Endothelial cell of umbilical vein (primary cell): ENCODE measurements at regions of chr10 and their contacts with region 1.

Region 1: GRCh38 chr10:124741281-124741921 is 2.8 kb downstream of the FAM53B start:
- DNase-seq: peak; percentile 85
- H3K4me3 ChIP-seq: peak overlapping the region in 1 of 3 experiments; percentile 17
- H3K27ac ChIP-seq: no peak overlapping the region
- H3K4me1 ChIP-seq: peaks cover 39% of the 10 kb centered on the region
- H3K27me3 ChIP-seq: no peaks in the 10 kb centered on the region
- CTCF ChIP-seq: peak; percentile 77 to 81
- POLR2A ChIP-seq: no peak

Region 2: DNA sequence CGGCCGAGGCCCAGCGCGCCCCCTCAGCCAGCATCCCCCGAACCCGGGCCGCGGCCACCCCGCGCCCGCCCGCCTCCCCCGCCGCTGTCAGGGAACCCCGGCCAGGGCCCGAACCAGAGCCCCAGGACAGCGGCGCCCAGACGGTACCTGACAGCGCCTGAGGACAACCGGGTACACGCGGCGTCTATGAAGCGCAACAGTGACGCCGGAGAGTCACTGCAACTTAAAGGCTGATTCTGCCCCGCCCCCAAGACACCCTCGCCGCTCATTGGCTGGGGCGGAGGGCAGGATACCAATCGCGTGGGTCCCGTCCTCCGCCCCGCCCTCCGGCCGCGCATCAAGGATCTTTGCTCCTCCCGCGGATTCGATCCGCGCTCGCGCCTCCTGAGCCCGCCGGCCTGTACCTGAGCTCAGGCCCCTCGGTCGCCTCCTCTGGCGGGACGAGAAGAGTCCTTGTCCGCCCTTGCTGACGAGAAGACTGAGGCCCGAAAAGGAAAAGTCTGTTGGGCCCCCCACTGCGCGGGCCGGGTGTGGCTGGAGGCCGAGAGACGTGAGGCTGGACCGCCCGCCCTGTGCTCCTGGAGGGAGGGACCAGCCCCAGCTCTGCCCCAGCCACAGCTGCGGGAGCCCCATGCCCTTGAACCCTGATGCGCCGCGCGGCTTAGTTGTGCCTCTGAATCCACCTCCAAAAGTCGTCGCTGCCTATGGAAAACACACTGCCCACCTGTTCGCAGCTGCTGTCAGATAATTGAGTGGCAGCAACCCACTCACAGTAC is 322.5 kb before region 1 on chr10 and contains the start of gene OAT:
- CTCF ChIA-PET with region 1: no interaction called
- POLR2A ChIA-PET with region 1: no interaction called
- dilution Hi-C with region 1: no loop called
- intact Hi-C with region 1: loop called (anchors 5 kb)
- DNase-seq: peak; percentile 96
- H3K4me3 ChIP-seq: peak within 1 kb of the TSS; percentile 75 to 86 (median 77)
- H3K27ac ChIP-seq: peak within 1 kb of the TSS; percentile 55
- H3K4me1 ChIP-seq: peaks cover 2% of the 10 kb centered on the region
- H3K27me3 ChIP-seq: peaks cover 0 to 6% of the 10 kb centered on the region in 2 experiments
- CTCF ChIP-seq: peak in 1 of 2 donors; percentile 31
- POLR2A ChIP-seq: peak; percentile 99
- total RNA-seq, gene OAT: 90.1 and 90.8 TPM in 2 replicates

Region 3: GRCh38 chr10:124539935-124540641 is 201.3 kb before region 1 on chr10:
- CTCF ChIA-PET with region 1: interaction called, 226 read pairs
- POLR2A ChIA-PET with region 1: no interaction called
- dilution Hi-C with region 1: no loop called
- intact Hi-C with region 1: loop called (anchors 1 kb)
- DNase-seq: peak; percentile 45
- H3K4me3 ChIP-seq: no peak overlapping the region
- H3K27ac ChIP-seq: no peak overlapping the region
- H3K4me1 ChIP-seq: no peaks in the 10 kb centered on the region
- H3K27me3 ChIP-seq: no peaks in the 10 kb centered on the region
- CTCF ChIP-seq: peak; percentile 72 to 93
- POLR2A ChIP-seq: no peak

Region 4: DNA sequence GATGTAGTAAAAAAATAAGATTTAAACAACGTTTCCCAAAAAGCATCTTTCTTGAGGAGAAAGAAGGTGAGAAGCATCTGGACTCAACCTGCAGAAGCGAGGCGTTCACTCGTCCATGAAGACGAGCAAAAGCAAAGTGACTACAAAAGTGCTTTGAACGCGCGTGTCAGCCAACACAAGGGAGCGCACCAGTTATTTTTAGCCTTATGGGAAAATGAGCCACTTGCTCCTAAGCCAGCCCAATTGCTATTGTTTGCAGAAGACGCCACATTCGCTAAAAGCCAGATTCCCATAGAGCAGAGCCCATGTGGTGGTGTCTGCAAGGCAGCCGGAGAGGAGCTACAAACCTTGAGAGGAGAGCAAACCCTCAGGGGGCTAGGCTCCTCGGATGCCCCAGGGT is 119.8 kb before region 1 on chr10:
- CTCF ChIA-PET with region 1: interaction called, 10 read pairs
- POLR2A ChIA-PET with region 1: no interaction called
- dilution Hi-C with region 1: no loop called
- intact Hi-C with region 1: no loop called
- DNase-seq: no peak
- H3K4me3 ChIP-seq: no peak overlapping the region
- H3K27ac ChIP-seq: no peak overlapping the region
- H3K4me1 ChIP-seq: no peaks in the 10 kb centered on the region
- H3K27me3 ChIP-seq: no peaks in the 10 kb centered on the region
- CTCF ChIP-seq: no peak
- POLR2A ChIP-seq: no peak

Region 5: GRCh38 chr10:124688889-124689670 is 52.3 kb before region 1 on chr10:
- CTCF ChIA-PET with region 1: interaction called, 10 read pairs
- POLR2A ChIA-PET with region 1: no interaction called
- dilution Hi-C with region 1: no loop called
- intact Hi-C with region 1: no loop called
- DNase-seq: no peak
- H3K4me3 ChIP-seq: no peak overlapping the region
- H3K27ac ChIP-seq: no peak overlapping the region
- H3K4me1 ChIP-seq: peaks cover 7% of the 10 kb centered on the region
- H3K27me3 ChIP-seq: no peaks in the 10 kb centered on the region
- CTCF ChIP-seq: no peak
- POLR2A ChIP-seq: no peak

Region 6: GRCh38 chr10:124724279-124725027 is 16.9 kb before region 1 on chr10:
- CTCF ChIA-PET with region 1: interaction called, 60 read pairs
- POLR2A ChIA-PET with region 1: no interaction called
- dilution Hi-C with region 1: no loop called
- intact Hi-C with region 1: loop called (anchors 1 kb)
- DNase-seq: no peak
- H3K4me3 ChIP-seq: no peak overlapping the region
- H3K27ac ChIP-seq: no peak overlapping the region
- H3K4me1 ChIP-seq: peaks cover 13% of the 10 kb centered on the region
- H3K27me3 ChIP-seq: no peaks in the 10 kb centered on the region
- CTCF ChIP-seq: no peak
- POLR2A ChIP-seq: no peak

Region 7: DNA sequence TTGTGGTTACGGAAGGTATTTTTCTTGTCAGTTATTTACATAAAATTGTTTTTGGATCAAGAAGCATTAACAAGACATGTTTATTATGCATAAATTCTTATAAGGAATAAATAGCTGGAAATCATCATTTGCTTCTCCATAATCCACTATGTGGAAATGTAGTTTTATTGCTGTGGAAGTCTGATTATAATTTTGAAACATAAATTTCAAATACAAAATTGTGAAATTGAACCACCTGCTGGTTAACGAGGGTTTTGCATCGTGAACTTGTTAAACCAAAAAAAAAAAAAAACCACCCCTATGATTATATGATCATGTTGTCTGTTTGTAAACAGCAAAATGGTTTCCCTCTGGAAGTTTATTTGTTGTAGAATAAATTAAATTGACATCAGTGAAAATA is 86.1 kb after region 1 on chr10:
- CTCF ChIA-PET with region 1: interaction called, 10 read pairs
- POLR2A ChIA-PET with region 1: no interaction called
- dilution Hi-C with region 1: no loop called
- intact Hi-C with region 1: loop called (anchors 2 kb)
- DNase-seq: peak; percentile 36
- H3K4me3 ChIP-seq: no peak overlapping the region
- H3K27ac ChIP-seq: no peak overlapping the region
- H3K4me1 ChIP-seq: no peaks in the 10 kb centered on the region
- H3K27me3 ChIP-seq: no peaks in the 10 kb centered on the region
- CTCF ChIP-seq: peak; percentile 26 to 35
- POLR2A ChIP-seq: no peak

Region 8: DNA sequence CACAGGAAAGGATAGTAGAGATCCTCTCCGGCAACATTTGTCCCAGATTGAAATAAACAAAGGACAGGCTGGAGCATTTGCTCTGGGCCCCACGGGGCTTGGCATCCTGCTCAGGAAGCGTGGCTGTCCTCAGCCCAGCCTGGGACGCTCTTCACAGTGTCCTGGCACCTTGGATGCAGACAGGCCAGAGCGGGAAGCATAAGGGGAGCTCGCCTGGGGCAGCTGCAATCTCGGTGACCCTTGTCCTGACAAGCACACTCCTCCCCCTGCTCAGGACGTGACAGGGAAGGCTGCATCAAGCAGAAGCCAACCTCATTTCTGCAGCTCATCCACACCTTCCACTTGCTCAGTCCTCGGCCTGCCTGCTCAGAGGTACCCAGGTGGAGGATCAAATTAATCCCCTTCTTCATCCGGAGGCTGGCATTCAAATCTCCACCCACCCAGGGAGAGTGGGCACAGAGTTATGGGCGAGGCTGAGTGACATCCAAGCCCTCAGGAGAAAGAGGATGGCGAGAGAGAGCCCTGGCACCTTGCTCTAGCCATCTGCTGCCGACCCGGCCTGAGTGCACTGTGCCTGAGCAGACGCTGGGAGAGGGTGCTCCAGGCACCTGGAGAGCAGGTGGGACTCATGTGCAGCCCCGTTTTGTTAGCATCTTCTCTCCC is 107.8 kb after region 1 on chr10:
- CTCF ChIA-PET with region 1: no interaction called
- POLR2A ChIA-PET with region 1: no interaction called
- dilution Hi-C with region 1: no loop called
- intact Hi-C with region 1: no loop called
- DNase-seq: no peak
- H3K4me3 ChIP-seq: no peak overlapping the region
- H3K27ac ChIP-seq: no peak overlapping the region
- H3K4me1 ChIP-seq: no peaks in the 10 kb centered on the region
- H3K27me3 ChIP-seq: no peaks in the 10 kb centered on the region
- CTCF ChIP-seq: no peak
- POLR2A ChIP-seq: no peak